ENCODE measurements at regions of chr20 and their contacts with region 1.

Region 1: DNA sequence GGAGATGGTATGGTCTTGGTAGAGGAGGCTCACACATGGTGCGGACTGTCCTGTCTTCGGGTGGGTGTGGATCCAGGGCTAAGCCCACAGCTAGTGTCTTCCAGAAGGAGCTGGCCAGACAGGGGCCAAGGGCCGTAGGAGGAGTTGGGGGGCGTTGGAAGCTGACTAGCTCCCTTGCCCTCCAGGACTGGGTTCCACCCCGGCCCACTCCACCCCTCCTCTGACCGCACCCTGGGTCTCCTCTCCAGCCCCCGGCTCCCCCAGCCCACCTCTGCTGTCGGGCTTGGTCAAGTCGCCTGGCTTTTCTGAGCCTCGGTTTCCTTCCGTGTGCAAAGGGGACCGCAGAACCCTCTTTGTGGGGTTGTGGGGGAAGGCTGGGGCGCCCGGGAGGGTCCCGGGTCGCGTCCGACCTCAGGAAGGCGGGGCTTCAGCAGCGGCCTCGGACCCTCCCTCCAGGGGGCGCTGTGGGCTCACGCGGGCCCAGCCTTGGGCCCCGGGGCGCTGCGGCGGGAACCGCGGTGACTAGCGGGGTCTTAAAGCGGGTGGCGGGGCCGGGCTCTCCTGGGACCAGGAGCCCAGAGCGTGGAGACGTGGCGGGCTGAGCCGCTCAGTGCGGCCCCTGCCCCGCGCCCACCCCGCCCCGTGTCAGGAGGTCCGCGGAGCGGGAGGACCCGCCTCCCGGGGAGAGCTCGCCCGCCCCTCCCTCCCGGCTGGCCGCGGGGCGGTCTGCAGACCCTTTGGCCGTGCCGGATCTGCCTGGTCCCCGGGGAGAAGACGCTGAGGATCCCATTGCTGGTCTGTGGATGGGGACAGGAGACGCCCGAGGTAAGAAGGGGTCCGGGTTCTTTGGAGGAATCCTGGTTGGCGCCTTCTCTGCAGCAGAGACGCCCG is 5.4 kb downstream of the NPBWR2 start:
- DNase-seq: peak; percentile 41 to 79
- ATAC-seq: peak; percentile 70 to 92
- H3K4me3 ChIP-seq: peak overlapping the region; percentile 71
- H3K27ac ChIP-seq: peak overlapping the region; percentile 81 to 91
- H3K4me1 ChIP-seq: 0 out of 3 replicates have a peak, but pooled peaks cover 6% of the 10 kb centered on the region
- CTCF ChIP-seq: peak; percentile 96
- EP300 ChIP-seq: no peak
- POLR2A ChIP-seq: no peak
- RAD21 ChIP-seq: peak; percentile 27 to 63

Region 2: DNA sequence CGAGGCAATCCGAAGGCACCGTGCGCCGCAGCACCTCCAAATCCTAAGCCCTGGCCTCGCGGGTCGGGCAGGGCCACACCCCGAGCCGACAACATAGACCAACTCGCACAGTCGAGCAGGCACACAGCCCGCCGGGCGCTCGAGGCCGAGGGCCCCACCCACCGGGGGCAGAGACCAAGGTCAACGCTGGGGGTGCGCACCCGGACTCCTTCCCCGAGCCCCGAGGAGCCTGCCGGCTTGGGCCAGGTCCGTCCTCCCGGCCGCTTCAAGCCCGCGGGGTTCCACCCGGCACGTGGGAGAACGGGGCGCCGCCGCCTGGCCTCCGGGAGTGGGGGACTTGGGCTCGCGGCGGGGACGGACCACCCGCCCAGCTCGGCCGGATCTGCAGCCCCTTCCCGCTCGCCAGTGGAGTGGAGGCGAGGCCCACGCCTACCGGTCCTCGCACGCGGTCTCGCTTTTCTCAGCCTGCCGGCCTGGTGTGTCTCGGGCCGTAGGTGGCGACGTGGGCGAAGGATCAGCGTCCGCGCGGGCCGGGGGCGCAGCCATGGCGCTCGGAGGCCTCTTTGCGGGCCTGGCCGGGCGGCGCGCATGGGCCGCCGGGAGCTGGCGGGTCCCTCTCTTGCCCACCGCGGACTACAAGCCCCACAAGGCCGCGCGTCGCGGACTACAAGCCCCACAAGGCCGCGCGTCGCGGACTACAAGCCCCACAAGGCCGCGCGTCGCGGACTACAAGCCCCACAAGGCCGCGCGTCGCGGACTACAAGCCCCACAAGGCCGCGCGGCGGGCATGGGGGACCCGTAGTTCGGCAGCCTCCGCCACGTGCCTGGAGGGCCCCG is 145.9 kb before region 1 on chr20 and contains the start of gene UCKL1:
- CTCF ChIA-PET with region 1: no interaction called
- POLR2A ChIA-PET with region 1: no interaction called
- DNase-seq: peak; percentile 81 to 90
- ATAC-seq: peak; percentile 73 to 88
- H3K4me3 ChIP-seq: peak within 1 kb of the TSS; percentile 84
- H3K27ac ChIP-seq: peak within 1 kb of the TSS; percentile 96 to 98
- H3K4me1 ChIP-seq: peaks cover 33% of the 10 kb centered on the region
- CTCF ChIP-seq: no peak
- EP300 ChIP-seq: no peak
- POLR2A ChIP-seq: peak; percentile 82
- RAD21 ChIP-seq: no peak
- polyA plus RNA-seq, gene UCKL1: 19.1 and 21.6 TPM in 2 replicates

Region 3: GRCh38 chr20:64079273-64080012 is 22.5 kb before region 1 on chr20 and contains the start of gene RGS19:
- CTCF ChIA-PET with region 1: interaction called, 54 read pairs
- POLR2A ChIA-PET with region 1: no interaction called
- DNase-seq: peak in 1 of 2 experiments; percentile 72
- ATAC-seq: peak; percentile 15 to 49; a peak in 5 of 6 replicates
- H3K4me3 ChIP-seq: peak within 1 kb of the TSS; percentile 89
- H3K27ac ChIP-seq: peak within 1 kb of the TSS; percentile 93 to 96
- H3K4me1 ChIP-seq: peaks cover 27% of the 10 kb centered on the region
- CTCF ChIP-seq: no peak
- EP300 ChIP-seq: no peak
- POLR2A ChIP-seq: peak; percentile 25; the same call in 1 of the 2 replicates
- RAD21 ChIP-seq: no peak
- polyA plus RNA-seq, gene RGS19: 12.3 and 13.8 TPM in 2 replicates

Region 4: GRCh38 chr20:64091770-64092169 is 10.2 kb before region 1 on chr20:
- CTCF ChIA-PET with region 1: interaction called, 54 read pairs
- POLR2A ChIA-PET with region 1: no interaction called
- DNase-seq: no peak
- ATAC-seq: peak in 1 of 2 experiments; percentile 39; a peak in 3 of 6 replicates
- H3K4me3 ChIP-seq: no peak overlapping the region
- H3K27ac ChIP-seq: no peak overlapping the region
- H3K4me1 ChIP-seq: no peaks in the 10 kb centered on the region
- CTCF ChIP-seq: no peak
- EP300 ChIP-seq: no peak
- POLR2A ChIP-seq: no peak
- RAD21 ChIP-seq: no peak

Region 5: DNA sequence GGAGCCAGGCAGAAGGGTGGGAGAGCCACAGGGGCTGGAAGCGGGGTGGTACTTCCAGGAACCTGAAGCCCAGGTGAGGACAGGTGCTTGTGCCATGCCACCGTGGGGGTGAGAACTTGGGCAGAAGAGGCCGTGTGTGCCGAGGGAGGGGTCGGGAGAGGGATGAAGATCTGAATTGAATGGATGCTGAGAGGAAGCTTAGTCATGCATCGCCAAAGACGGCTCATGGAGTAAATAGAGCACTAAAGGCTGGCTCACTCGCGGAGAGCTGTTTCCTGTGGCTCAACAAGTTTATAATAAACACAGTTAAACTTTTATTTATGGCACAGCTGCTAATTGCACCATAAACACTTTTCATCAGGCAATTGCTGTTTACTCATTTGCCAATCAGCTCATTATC is 40.6 kb after region 1 on chr20:
- CTCF ChIA-PET with region 1: interaction called, 10 read pairs
- POLR2A ChIA-PET with region 1: no interaction called
- DNase-seq: no peak
- ATAC-seq: no peak
- H3K4me3 ChIP-seq: no peak overlapping the region
- H3K27ac ChIP-seq: no peak overlapping the region
- H3K4me1 ChIP-seq: no peaks in the 10 kb centered on the region
- CTCF ChIP-seq: no peak
- EP300 ChIP-seq: no peak
- POLR2A ChIP-seq: no peak
- RAD21 ChIP-seq: no peak

Region 6: DNA sequence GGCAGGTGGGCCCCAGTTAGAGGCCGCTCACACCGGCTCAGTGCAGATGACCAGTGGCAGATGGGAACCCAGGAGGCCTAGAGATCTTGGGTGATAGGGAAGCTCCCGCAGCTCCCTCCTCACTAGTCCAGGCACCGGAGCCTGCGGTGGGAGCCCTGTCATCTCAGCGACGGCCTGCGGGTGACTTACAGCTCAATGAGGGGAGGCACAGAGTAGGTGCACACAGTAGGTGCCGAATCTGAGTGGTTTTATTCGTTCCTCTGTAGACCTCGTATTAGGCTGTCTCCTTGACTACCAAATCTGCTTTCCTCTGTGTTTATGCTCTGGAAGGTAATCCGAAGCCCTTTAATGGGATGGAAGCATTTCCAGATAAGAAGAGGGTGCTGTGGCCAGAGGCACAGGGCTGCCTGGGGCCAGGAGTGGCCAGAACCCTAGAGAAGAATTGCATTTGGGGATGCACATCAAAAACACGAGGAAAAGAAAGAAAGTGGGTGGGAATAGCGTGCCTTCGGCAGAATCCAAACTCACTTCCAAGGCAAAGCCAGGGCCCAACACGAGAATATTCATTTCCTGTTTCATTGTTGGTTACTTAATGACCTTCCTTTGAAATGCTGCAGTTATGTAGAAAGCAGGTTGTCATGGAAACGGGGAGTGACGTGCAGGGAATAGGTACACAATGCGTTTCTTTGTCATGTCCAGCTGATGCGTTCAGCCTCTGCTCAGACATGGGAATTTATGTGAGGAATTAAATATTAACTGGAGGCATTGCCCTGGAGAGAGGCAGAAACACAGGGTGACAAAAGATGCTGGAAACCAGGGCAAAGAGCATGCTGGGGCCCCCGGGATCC is 86.9 kb after region 1 on chr20:
- CTCF ChIA-PET with region 1: no interaction called
- POLR2A ChIA-PET with region 1: no interaction called
- DNase-seq: peak; percentile 65 to 88
- ATAC-seq: peak; percentile 74 to 77
- H3K4me3 ChIP-seq: no peak overlapping the region
- H3K27ac ChIP-seq: peak overlapping the region; percentile 38 to 51; a peak in 5 of 6 replicates
- H3K4me1 ChIP-seq: peaks cover 16% of the 10 kb centered on the region; the same call in 2 of the 3 replicates
- CTCF ChIP-seq: no peak
- EP300 ChIP-seq: no peak
- POLR2A ChIP-seq: no peak
- RAD21 ChIP-seq: no peak

Measured in A549 (cell line).